IMR-90 (cell line): ENCODE measurements at regions of chr13 and their contacts with region 1.

Region 1: GRCh38 chr13:99656092-99656745 is 154.9 kb downstream of the TM9SF2 start:
- DNase-seq: peak; percentile 67
- ATAC-seq: peak; percentile 85
- H3K4me3 ChIP-seq: no peak overlapping the region
- H3K27ac ChIP-seq: no peak overlapping the region
- H3K4me1 ChIP-seq: no peaks in the 10 kb centered on the region
- H3K27me3 ChIP-seq: peaks cover 23% of the 10 kb centered on the region
- CTCF ChIP-seq: peak; percentile 87
- POLR2A ChIP-seq: no peak
- RAD21 ChIP-seq: peak; percentile 83

Region 2: GRCh38 chr13:99442273-99442895 is 213.8 kb before region 1 on chr13:
- CTCF ChIA-PET with region 1: interaction called, 3 read pairs
- POLR2A ChIA-PET with region 1: no interaction called
- dilution Hi-C with region 1: no loop called
- in situ Hi-C with region 1: no loop called
- intact Hi-C with region 1: loop called (anchors 5 kb)
- DNase-seq: peak; percentile 45
- ATAC-seq: peak; percentile 91
- H3K4me3 ChIP-seq: no peak overlapping the region
- H3K27ac ChIP-seq: no peak overlapping the region
- H3K4me1 ChIP-seq: no peaks in the 10 kb centered on the region
- H3K27me3 ChIP-seq: peaks cover 26% of the 10 kb centered on the region
- CTCF ChIP-seq: peak; percentile 94
- POLR2A ChIP-seq: no peak
- RAD21 ChIP-seq: peak; percentile 89

Region 3: GRCh38 chr13:99536023-99536422 is 120.2 kb before region 1 on chr13:
- CTCF ChIA-PET with region 1: no interaction called
- POLR2A ChIA-PET with region 1: no interaction called
- dilution Hi-C with region 1: no loop called
- in situ Hi-C with region 1: no loop called
- intact Hi-C with region 1: no loop called
- DNase-seq: no peak
- ATAC-seq: no peak
- H3K4me3 ChIP-seq: no peak overlapping the region
- H3K27ac ChIP-seq: no peak overlapping the region
- H3K4me1 ChIP-seq: no peaks in the 10 kb centered on the region
- H3K27me3 ChIP-seq: no peaks in the 10 kb centered on the region
- CTCF ChIP-seq: no peak
- POLR2A ChIP-seq: no peak
- RAD21 ChIP-seq: no peak

Region 4: DNA sequence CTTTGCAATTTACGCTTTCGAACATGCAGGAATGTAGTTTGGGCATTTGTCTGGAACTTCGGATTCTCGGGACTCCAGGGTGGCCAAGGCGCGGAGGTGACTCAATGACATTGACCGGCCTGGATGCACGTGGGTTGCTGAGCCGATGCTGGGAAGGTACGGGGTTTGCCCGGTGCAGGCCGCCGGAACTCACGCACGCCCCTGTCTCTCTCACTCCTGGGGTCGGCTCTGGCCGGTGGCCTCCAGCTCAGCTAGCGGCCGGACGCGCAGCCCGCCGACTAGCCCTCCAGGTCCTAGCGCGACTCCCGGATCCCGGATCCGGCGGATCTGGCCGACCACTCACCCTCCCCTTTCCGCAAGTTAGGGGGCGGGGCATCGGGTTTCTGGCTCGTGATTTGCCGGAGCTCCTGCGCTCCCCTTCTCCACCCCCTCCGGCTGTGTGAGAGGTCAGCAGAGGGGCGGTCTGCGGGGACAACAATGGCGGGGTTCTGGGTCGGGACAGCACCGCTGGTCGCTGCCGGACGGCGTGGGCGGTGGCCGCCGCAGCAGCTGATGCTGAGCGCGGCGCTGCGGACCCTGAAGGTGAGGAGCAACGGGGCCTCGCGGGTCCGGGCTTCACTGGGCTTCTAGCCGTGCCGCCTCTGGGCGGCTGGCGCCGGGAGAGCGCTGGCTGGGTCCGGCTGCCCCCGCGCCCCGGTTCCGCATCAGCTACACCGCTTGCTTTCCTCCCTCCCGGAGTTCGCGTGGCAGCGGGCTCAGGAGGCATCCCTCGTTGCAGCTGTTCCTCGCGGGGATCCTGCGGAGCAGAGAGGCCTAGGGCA is 432.6 kb after region 1 on chr13 and contains the start of gene PCCA:
- CTCF ChIA-PET with region 1: no interaction called
- POLR2A ChIA-PET with region 1: no interaction called
- dilution Hi-C with region 1: no loop called
- in situ Hi-C with region 1: no loop called
- intact Hi-C with region 1: loop called (anchors 5 kb)
- DNase-seq: peak; percentile 89
- ATAC-seq: peak; percentile 98
- H3K4me3 ChIP-seq: peak within 1 kb of the TSS; percentile 75
- H3K27ac ChIP-seq: peak within 1 kb of the TSS; percentile 87
- H3K4me1 ChIP-seq: peaks cover 2% of the 10 kb centered on the region
- H3K27me3 ChIP-seq: no peaks in the 10 kb centered on the region
- CTCF ChIP-seq: no peak
- POLR2A ChIP-seq: no peak
- RAD21 ChIP-seq: 0 out of 2 replicates have a peak, but pooled peaks have one; percentile 6
- total RNA-seq, gene PCCA: 22.8 and 24.0 TPM in 2 replicates

Region 5: DNA sequence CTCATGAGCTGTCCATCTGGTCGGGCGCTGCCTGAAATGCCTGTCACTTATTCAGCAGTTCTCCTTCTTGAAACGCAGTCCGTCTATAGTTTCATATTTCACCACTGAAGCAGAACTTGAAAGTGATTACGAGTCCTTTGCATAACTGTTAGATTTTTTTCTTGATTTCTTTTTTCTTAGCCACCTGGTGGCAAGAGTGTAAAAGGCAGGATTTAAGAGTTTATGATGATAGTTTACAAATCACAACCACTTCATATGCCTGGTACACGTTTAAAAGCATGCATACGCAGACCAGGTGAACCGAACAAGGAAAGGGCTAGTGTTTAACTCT is 886.6 kb after region 1 on chr13:
- CTCF ChIA-PET with region 1: no interaction called
- POLR2A ChIA-PET with region 1: no interaction called
- dilution Hi-C with region 1: no loop called
- in situ Hi-C with region 1: loop called (anchors 10 kb)
- intact Hi-C with region 1: loop called (anchors 1 kb)
- DNase-seq: peak; percentile 64
- ATAC-seq: peak; percentile 67
- H3K4me3 ChIP-seq: no peak overlapping the region
- H3K27ac ChIP-seq: no peak overlapping the region
- H3K4me1 ChIP-seq: peaks cover 7% of the 10 kb centered on the region; the same call in 1 of the 2 replicates
- H3K27me3 ChIP-seq: no peaks in the 10 kb centered on the region
- CTCF ChIP-seq: peak; percentile 59
- POLR2A ChIP-seq: no peak
- RAD21 ChIP-seq: peak; percentile 42

Region 6: DNA sequence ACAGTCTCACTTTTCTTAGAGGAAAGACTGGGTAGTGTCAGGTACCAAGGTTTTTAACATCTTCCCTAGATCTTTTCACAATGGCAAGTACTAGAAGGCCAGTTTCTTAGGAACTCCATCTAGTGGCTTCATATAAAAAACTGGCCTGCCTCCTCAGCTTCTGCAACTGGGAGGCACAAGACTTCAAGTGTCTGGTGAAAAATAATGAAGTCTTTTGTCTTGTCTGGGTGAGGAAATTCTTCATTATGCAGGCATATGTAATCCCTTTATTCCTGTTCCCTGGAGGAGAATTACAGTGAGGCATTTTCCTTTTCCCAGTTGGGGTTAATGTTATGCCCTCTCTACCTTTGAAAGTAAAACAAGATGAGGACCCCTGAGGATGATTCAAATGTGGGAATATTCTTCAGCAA is 1459.5 kb after region 1 on chr13:
- CTCF ChIA-PET with region 1: no interaction called
- POLR2A ChIA-PET with region 1: no interaction called
- dilution Hi-C with region 1: no loop called
- in situ Hi-C with region 1: loop called (anchors 25 kb)
- intact Hi-C with region 1: no loop called
- DNase-seq: no peak
- ATAC-seq: no peak; the same call in 1 of the 2 replicates
- H3K4me3 ChIP-seq: no peak overlapping the region
- H3K27ac ChIP-seq: no peak overlapping the region
- H3K4me1 ChIP-seq: no peaks in the 10 kb centered on the region
- H3K27me3 ChIP-seq: no peaks in the 10 kb centered on the region; the same call in 1 of the 2 replicates
- CTCF ChIP-seq: 0 out of 2 replicates have a peak, but pooled peaks have one; percentile 9
- POLR2A ChIP-seq: no peak
- RAD21 ChIP-seq: no peak